Natural killer cell (primary cell): ENCODE measurements at regions of chr7 and their contacts with region 1.

Region 1: GRCh38 chr7:30564243-30564892 is 30.3 kb upstream of the GARS1 start:
- DNase-seq: peak; percentile 70 to 88
- ATAC-seq: peak; percentile 88 to 99 (median 97)
- H3K4me3 ChIP-seq: no peak overlapping the region
- H3K4me3 Mint-ChIP-seq: no peak overlapping the region
- H3K27ac ChIP-seq: no peak overlapping the region
- H3K27ac Mint-ChIP-seq: peak overlapping the region in 1 of 2 donors; percentile 68
- H3K4me1 ChIP-seq: no peaks in the 10 kb centered on the region
- H3K4me1 Mint-ChIP-seq: peaks cover 0 to 7% of the 10 kb centered on the region in 2 donors
- H3K27me3 ChIP-seq: no peaks in the 10 kb centered on the region
- H3K27me3 Mint-ChIP-seq: no peaks in the 10 kb centered on the region
- CTCF ChIP-seq: peak; percentile 88

Region 2: GRCh38 chr7:30276203-30276900 is 288.0 kb before region 1 on chr7:
- intact Hi-C with region 1: loop called (anchors 1 kb)
- DNase-seq: peak; percentile 31 to 79
- ATAC-seq: peak; percentile 76 to 92 (median 84)
- H3K4me3 ChIP-seq: no peak overlapping the region
- H3K4me3 Mint-ChIP-seq: no peak overlapping the region
- H3K27ac ChIP-seq: no peak overlapping the region
- H3K27ac Mint-ChIP-seq: no peak overlapping the region
- H3K4me1 ChIP-seq: no peaks in the 10 kb centered on the region
- H3K4me1 Mint-ChIP-seq: peaks cover 11 to 15% of the 10 kb centered on the region in 2 donors
- H3K27me3 ChIP-seq: no peaks in the 10 kb centered on the region
- H3K27me3 Mint-ChIP-seq: no peaks in the 10 kb centered on the region
- CTCF ChIP-seq: peak; percentile 73

Region 3: DNA sequence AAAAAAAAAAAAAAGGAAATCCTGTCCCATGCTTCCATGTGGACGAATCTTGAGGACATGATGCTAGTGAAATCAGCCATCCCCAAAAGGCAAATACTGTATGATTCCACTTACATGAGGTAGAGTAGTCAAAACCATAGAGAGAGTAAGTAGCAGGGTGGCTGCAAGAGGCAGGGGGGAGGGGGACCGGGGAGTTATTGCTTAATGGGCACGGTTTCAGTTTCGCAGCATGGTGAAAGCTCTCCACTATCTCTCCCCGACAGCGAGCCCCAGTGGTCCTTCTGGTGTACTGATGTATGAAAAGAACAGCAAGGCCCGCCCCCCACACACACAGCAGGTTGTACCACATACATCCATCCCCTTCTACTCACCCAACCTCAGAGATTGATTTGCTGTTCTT is 118.6 kb before region 1 on chr7:
- intact Hi-C with region 1: loop called (anchors 10 kb)
- DNase-seq: peak; percentile 78 to 79
- ATAC-seq: peak; percentile 99 to 100 (median 99)
- H3K4me3 ChIP-seq: no peak overlapping the region
- H3K4me3 Mint-ChIP-seq: no peak overlapping the region
- H3K27ac ChIP-seq: peak overlapping the region; percentile 3
- H3K27ac Mint-ChIP-seq: peak overlapping the region; percentile 14 to 66
- H3K4me1 ChIP-seq: peaks cover 9% of the 10 kb centered on the region
- H3K4me1 Mint-ChIP-seq: peaks cover 5 to 10% of the 10 kb centered on the region in 2 donors
- H3K27me3 ChIP-seq: no peaks in the 10 kb centered on the region
- H3K27me3 Mint-ChIP-seq: no peaks in the 10 kb centered on the region
- CTCF ChIP-seq: peak; percentile 44

Region 4: GRCh38 chr7:30510124-30511075 is 54.0 kb before region 1 on chr7:
- intact Hi-C with region 1: loop called (anchors 1 kb)
- DNase-seq: peak in 1 of 2 donors; percentile 63
- ATAC-seq: peak; percentile 63 to 84 (median 79)
- H3K4me3 ChIP-seq: no peak overlapping the region
- H3K4me3 Mint-ChIP-seq: no peak overlapping the region
- H3K27ac ChIP-seq: no peak overlapping the region
- H3K27ac Mint-ChIP-seq: no peak overlapping the region
- H3K4me1 ChIP-seq: no peaks in the 10 kb centered on the region
- H3K4me1 Mint-ChIP-seq: peaks cover 2 to 3% of the 10 kb centered on the region in 2 donors
- H3K27me3 ChIP-seq: no peaks in the 10 kb centered on the region
- H3K27me3 Mint-ChIP-seq: no peaks in the 10 kb centered on the region
- CTCF ChIP-seq: peak; percentile 88